Cardiac septum (tissue), 1 donor: ENCODE measurements at regions of chr1 and their contacts with region 1.

Region 1: DNA sequence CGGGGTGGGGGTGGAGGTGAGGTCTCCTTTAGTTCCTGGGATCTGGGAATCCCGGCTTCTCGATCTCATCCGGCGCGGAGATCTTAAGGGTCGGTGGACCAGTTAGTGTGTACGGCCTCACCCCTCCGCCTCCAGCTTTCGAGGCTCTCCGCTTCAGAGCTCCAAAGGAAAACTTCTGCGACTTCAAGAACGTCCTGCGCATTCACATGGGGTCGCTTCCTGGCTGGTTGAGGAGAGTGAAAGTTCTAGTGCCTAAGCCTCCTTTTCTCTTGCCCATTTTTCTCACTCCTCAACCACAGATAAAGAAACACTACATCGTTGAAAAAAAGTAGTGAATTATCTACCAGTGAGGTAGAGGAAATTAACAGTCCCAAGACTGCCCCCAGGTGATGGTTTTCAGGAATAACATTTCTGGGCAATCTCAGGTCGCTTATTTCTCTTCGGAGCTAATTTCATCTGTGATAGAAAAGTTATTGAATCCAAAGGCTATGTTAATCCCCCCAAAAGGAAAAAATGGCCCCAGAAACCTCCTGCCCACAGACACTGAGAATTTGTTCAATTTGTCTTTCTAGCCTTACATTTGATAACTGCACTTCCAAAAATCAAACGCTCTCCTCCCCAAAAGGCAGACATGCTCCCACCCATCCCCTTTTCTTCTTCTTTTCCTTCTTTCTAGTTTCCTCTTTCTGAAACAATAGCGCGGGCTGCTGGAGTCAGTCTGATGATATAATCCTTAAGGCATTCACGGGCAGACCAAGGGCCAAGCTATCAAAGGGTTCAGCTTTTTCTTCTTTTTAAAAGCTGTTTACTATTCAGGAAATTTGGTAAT is 20.6 kb upstream of the TBX15 start:
- DNase-seq: no peak

Region 2: DNA sequence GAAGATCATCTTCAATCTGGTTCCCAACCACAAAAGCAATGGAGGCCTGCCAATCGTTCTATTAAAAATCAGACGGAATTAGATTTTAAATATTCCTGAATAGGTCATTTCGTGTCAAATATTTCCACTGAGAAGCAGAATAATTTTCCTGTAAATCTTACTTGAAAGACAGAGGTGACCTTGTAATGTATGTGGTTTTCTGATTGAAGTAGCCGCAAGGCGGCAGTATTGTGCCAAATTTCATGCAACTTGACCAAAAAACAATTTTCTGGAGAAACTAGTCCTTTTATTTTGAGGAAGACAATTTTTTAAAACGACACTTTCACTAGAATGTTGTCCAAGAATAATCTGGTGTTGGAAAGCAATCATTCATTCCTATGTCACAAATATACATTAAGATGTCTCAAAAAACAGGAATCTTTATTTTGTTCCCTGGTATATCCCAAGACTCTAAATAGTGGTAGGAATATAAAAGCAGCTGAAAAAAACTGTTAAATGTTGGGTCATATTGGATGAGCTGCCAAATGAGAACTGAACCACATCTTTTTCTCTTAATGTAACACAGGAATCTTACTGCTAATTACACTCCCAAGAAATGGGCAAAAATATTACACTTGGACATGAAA is 857.3 kb before region 1 on chr1:
- intact Hi-C with region 1: loop called (anchors 2 kb)
- DNase-seq: no peak

Region 3: GRCh38 chr1:118223426-118223825 is 785.3 kb before region 1 on chr1:
- intact Hi-C with region 1: loop called (anchors 10 kb)
- DNase-seq: no peak

Region 4: GRCh38 chr1:118945489-118945888 is 63.2 kb before region 1 on chr1:
- intact Hi-C with region 1: no loop called
- DNase-seq: no peak

Region 5: GRCh38 chr1:118987468-118988185 is 21.1 kb before region 1 on chr1:
- intact Hi-C with region 1: no loop called
- DNase-seq: no peak